Right ventricle myocardium superior (tissue), 1 donor: ENCODE measurements at regions of chr2 and their contacts with region 1.

Region 1: DNA sequence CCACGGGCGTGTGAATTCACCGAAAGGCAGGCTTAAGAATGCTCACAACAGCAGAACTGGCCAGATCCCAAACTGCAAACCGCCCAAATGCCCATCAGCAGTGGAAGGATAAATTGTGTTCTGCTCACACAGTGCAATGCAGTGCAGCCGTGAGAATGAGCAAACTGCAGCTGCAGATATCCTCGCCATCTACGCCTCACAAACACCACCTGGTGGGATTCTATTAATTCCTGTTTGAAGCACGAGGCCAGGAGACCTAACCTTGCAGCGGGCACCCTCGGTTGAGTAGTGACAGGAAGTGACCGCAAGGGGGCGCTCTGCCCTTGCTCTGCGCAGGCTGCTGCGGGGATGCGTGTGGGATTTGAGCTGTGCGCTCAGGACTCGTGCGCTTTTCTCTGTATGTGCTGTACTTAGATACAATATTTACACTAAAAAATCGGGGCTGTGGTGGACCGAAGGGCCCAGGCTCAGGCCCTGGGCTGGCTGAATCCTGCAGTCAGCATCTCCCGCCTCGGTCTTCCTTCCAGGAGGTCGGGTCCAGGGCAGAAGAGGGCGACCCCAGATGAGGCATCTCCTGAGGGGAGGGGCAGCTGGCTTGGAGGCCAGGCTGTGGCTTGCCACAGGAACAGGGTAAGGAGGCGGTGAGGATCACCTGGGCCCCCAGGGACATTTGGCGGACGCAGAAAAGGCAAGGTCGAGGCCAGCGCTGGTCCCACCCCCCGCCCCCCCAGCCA is 19.8 kb upstream of the PDIA6 start:
- DNase-seq: peak; percentile 87
- ATAC-seq: peak; percentile 89

Region 2: DNA sequence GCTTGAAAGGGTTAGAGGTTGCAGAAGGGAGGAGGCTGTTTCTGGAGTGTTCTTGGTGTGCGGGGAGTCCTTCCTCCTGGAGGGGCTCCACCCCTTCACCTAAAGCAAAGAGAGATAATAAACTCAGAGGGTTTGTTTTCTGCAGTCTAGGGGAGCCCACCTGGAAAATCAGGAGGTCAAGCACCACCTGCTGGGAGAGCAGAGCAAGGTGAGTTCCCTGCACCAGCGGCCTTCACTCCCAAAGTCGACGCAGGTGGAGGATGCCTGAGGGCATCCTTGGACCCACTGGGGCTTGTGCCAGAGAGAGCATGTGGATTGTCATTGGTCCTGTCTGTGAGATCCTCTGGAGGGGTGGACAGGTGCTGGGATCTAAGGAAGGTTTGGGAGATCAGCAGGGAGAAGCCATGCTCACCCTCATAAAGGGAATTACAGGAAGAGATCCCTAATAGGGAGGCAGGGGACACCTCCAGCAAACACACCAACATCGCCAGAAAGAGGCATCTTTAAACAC is 196.1 kb after region 1 on chr2:
- intact Hi-C with region 1: loop called (anchors 5 kb)
- DNase-seq: no peak
- ATAC-seq: no peak

Region 3: DNA sequence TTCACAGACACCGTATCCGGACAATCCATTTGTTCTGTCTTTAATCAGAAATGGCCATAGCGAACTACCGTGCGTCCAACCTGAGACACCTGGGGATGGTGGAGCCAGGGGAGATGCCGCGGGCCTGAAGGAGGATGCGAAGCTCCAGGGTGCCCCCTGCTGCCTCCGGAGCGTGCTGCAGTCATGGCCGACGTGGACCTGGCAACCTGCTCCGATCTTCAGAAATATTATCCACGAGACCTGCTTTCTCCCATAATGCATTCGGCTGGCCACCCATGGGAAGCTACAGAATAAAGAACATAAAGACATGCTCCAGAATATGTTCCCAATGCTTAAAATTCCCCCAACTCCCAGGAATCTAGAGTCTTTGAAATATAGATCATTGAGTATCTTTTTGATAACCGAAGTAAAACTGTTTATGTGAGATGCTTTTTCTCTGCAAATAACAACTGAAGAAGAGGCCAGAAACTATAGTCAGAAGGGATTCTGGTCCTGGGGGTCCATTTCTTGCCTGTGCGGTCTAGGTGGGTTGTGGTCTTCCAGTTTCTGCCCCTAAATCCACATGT is 292.2 kb after region 1 on chr2:
- intact Hi-C with region 1: loop called (anchors 2 kb)
- DNase-seq: peak; percentile 73
- ATAC-seq: peak; percentile 73